Cardiac septum (tissue), 1 donor: ENCODE measurements at regions of chr6 and their contacts with region 1.

Region 1: GRCh38 chr6:38503032-38503773 is 136.5 kb downstream of the BTBD9 start:
- DNase-seq: no peak

Region 2: DNA sequence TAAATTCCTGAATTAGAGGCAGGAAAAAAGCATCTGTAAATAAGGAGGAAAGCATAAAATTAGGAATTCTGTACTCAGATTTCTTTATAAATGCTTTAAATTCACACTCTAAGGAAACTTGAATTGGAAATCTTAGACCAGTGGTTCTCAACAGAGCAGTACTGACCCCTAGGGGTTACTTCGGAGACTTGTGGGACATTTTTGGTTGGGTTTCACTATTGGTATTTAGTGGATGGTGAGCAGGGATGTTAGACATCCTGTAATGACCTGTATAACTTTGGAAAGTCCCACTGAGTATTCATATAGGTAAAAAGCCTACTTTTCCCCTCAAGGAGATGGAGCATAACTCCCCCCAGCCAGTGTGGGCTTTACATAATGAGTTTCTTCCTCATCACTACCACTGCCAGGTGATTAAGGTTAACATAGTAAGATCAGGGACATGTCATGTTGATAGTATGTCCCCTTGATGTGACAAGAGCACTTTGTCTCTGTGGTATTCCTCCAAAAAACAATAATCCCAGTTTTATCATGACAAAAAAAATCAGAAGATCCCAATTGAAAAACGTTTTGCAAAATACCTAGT is 168.8 kb after region 1 on chr6:
- intact Hi-C with region 1: loop called (anchors 5 kb)
- DNase-seq: no peak